H1 (cell line): ENCODE measurements at regions of chr10 and their contacts with region 1.

Region 1: GRCh38 chr10:103659674-103660363 is 166.3 kb downstream of the NEURL1 start:
- DNase-seq: no peak
- H3K4me3 ChIP-seq: peak overlapping the region in 2 of 4 experiments; percentile 8 to 51; a peak in 1 of 8 replicates
- H3K27ac ChIP-seq: no peak overlapping the region
- H3K4me1 ChIP-seq: peaks cover 0 to 27% (median 18%) of the 10 kb centered on the region in 4 experiments; a peak in 6 of 7 replicates
- H3K27me3 ChIP-seq: no peaks in the 10 kb centered on the region; a peak in 1 of 7 replicates
- CTCF ChIP-seq: no peak
- EP300 ChIP-seq: no peak
- POLR2A ChIP-seq: no peak
- RAD21 ChIP-seq: no peak

Region 2: GRCh38 chr10:103637927-103638557 is 21.8 kb before region 1 on chr10:
- CTCF ChIA-PET with region 1: interaction called, 185 read pairs
- POLR2A ChIA-PET with region 1: interaction called, 18 read pairs
- DNase-seq: no peak
- H3K4me3 ChIP-seq: no peak overlapping the region
- H3K27ac ChIP-seq: no peak overlapping the region
- H3K4me1 ChIP-seq: peaks cover 8 to 35% (median 27%) of the 10 kb centered on the region in 4 experiments
- H3K27me3 ChIP-seq: no peaks in the 10 kb centered on the region
- CTCF ChIP-seq: no peak
- EP300 ChIP-seq: no peak
- POLR2A ChIP-seq: no peak
- RAD21 ChIP-seq: no peak

Region 3: DNA sequence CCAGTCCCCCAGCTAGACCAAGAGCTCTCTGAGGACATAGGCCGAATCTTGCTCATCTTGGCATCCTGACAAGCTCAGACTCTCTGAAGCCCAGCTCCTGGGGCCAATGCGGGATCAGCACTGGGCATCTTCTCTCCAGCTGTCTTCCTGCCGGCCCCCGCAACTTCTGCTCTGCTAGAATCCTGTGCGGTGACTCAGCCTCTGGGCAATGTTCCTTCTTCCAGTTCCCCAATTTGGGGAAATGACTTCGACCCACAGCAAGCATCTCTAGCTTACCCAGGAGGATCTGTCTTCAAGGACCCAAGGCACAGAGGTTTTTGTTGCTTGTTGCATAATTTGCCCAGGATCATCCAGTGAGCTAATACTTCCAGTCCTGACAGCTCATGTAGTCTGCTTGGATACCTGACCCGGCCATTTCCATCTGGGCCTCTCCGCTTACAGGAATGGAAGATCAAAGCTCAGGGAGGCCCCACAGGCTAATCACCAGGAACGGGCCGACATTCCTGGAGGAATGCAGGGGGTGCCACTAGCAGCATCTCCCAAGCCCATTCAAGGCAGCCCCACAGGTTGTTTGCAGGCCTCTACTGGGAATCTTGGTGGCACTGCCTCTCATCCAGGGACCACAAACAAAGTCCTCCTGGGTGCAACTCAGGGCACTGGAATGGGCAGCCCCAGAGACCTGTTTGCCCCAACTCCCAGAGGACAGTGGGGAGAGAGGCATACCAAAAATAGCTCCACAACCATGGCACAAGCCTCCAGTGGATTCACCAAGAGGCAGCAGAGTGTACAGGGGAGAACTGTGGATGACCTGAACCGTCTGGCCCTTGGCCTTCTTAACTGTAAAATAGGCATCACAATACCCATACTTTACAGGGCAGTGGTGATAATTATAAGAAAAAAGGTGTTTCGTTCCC is 14.4 kb before region 1 on chr10:
- CTCF ChIA-PET with region 1: interaction called, 185 read pairs
- POLR2A ChIA-PET with region 1: interaction called, 9 read pairs
- DNase-seq: no peak
- H3K4me3 ChIP-seq: no peak overlapping the region
- H3K27ac ChIP-seq: no peak overlapping the region
- H3K4me1 ChIP-seq: peaks cover 0 to 24% (median 12%) of the 10 kb centered on the region in 4 experiments; a peak in 6 of 7 replicates
- H3K27me3 ChIP-seq: no peaks in the 10 kb centered on the region
- CTCF ChIP-seq: no peak
- EP300 ChIP-seq: no peak
- POLR2A ChIP-seq: no peak
- RAD21 ChIP-seq: no peak

Region 4: GRCh38 chr10:103789771-103790201 is 130.0 kb after region 1 on chr10:
- CTCF ChIA-PET with region 1: no interaction called
- POLR2A ChIA-PET with region 1: no interaction called
- DNase-seq: no peak
- H3K4me3 ChIP-seq: no peak overlapping the region
- H3K27ac ChIP-seq: no peak overlapping the region
- H3K4me1 ChIP-seq: no peaks in the 10 kb centered on the region; a peak in 2 of 7 replicates
- H3K27me3 ChIP-seq: no peaks in the 10 kb centered on the region
- CTCF ChIP-seq: no peak
- EP300 ChIP-seq: no peak
- POLR2A ChIP-seq: no peak
- RAD21 ChIP-seq: no peak

Region 5: GRCh38 chr10:103918053-103918846 is 258.4 kb after region 1 on chr10 and contains the start of gene STN1:
- CTCF ChIA-PET with region 1: no interaction called
- POLR2A ChIA-PET with region 1: no interaction called
- DNase-seq: peak; percentile 95 to 96
- H3K4me3 ChIP-seq: peak within 1 kb of the TSS; percentile 74 to 91 (median 81)
- H3K27ac ChIP-seq: peak within 1 kb of the TSS; percentile 22; the same call in 1 of the 2 replicates
- H3K4me1 ChIP-seq: peaks cover 7 to 19% (median 11%) of the 10 kb centered on the region in 4 experiments
- H3K27me3 ChIP-seq: no peaks in the 10 kb centered on the region
- CTCF ChIP-seq: peak; percentile 41 to 52 (median 42)
- EP300 ChIP-seq: peak; percentile 61 to 99; a peak in 2 of 3 replicates
- POLR2A ChIP-seq: peak in 1 of 2 experiments; percentile 91; a peak in 1 of 3 replicates
- RAD21 ChIP-seq: peak in 1 of 2 experiments; percentile 30; a peak in 1 of 4 replicates
- total RNA-seq, gene STN1: 10.3 and 12.4 TPM in 2 replicates